MCF 10A (cell line): ENCODE measurements at regions of chr1 and their contacts with region 1.

Region 1: GRCh38 chr1:31789259-31790065 is 25.3 kb upstream of the ADGRB2 start:
- DNase-seq: peak; percentile 86
- H3K4me3 Mint-ChIP-seq: peak overlapping the region; percentile 76
- H3K27ac Mint-ChIP-seq: peak overlapping the region; percentile 95
- H3K4me1 Mint-ChIP-seq: peaks cover 8% of the 10 kb centered on the region
- H3K27me3 Mint-ChIP-seq: no peaks in the 10 kb centered on the region
- CTCF ChIP-seq: peak; percentile 92

Region 2: DNA sequence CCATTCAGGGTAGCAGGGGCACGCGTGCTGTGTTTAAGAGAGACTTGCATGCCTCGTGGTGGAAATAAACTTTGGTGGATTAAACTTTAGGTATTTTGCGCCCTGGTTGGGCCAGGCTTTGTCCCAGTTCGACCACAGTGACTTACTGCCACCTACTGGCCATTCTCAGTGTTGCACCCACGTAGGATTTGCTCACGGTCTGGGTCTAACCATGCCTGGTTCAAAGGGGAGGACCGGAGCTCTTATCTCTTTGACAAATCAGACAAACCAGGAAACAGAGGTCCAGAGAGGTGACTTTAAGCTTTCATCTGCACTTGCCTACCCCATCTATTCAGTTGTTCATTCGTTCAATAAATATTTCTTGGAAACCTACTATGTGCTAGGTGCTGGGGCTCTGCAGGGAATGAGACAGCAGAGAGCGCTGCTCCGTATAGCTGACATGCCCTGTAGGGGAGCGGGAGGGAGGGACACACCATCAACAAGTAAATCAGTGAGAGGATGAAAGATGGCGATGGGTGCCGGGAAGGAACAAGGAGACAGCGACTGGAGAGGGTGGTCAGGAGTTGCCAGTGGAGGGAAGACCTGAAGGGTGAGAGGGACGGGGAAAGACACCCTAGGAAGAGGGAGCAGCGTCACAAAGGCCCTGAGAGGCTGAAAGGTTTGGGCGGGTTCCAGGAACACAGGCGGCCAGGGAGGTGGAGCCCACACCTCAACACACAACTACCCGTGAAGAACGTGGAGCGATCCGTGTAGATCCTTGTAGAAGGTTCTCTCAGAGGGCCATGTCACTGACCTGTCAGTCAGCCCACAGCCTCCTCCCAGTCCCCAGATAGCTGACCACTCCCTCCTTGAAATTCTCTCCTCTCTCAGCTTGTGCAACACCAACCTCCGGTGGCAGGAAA is 240.3 kb before region 1 on chr1:
- CTCF ChIA-PET with region 1: interaction called, 9 read pairs
- POLR2A ChIA-PET with region 1: interaction called, 10 read pairs
- intact Hi-C with region 1: loop called (anchors 1 kb)
- DNase-seq: peak; percentile 91
- H3K4me3 Mint-ChIP-seq: peak overlapping the region; percentile 73
- H3K27ac Mint-ChIP-seq: peak overlapping the region; percentile 33
- H3K4me1 Mint-ChIP-seq: peaks cover 11% of the 10 kb centered on the region
- H3K27me3 Mint-ChIP-seq: no peaks in the 10 kb centered on the region
- CTCF ChIP-seq: peak; percentile 71

Region 3: GRCh38 chr1:31593770-31594632 is 195.5 kb before region 1 on chr1:
- CTCF ChIA-PET with region 1: interaction called, 4 read pairs
- POLR2A ChIA-PET with region 1: no interaction called
- intact Hi-C with region 1: loop called (anchors 1 kb)
- DNase-seq: peak; percentile 81
- H3K4me3 Mint-ChIP-seq: no peak overlapping the region
- H3K27ac Mint-ChIP-seq: no peak overlapping the region
- H3K4me1 Mint-ChIP-seq: peaks cover 11% of the 10 kb centered on the region
- H3K27me3 Mint-ChIP-seq: peaks cover 10% of the 10 kb centered on the region
- CTCF ChIP-seq: peak; percentile 83

Region 4: DNA sequence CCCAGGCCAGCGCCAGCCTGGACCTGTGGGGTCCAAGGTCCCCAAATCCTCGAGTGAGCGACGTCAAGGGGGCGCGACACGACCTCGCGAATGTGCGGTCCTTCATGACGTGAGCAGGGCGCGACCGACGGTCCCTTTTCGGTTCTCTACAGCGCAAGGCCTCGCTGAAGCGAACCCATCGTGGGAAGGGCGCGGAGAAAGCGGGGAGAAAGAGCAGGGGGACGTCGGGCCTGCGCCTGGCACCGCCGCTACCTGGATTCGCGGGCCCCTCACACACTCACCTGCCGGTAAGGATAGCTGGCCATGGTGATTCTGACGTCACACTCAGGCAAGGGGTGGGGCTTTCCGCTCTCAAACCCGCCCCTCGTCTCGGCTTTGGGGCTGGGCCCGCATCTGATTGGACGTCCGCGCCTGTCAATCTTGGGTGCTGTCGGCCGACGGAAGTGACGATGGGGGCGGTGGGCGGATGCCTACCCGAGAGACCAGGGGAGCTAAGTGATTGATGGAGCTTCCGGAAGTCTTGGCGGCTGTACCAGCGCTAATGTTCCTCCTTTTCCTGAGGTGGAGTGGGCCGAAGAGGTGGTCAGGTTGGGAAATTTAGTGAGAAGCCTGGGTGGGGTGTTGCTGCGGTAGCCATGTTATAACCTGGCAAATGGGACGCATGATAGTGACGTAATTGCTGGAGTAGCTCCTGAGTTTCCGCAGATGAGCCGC is 144.7 kb before region 1 on chr1 and contains the start of gene PEF1:
- CTCF ChIA-PET with region 1: interaction called, 3 read pairs
- POLR2A ChIA-PET with region 1: interaction called, 11 read pairs
- intact Hi-C with region 1: no loop called
- DNase-seq: peak; percentile 98
- H3K4me3 Mint-ChIP-seq: peak within 1 kb of the TSS; percentile 89
- H3K27ac Mint-ChIP-seq: peak within 1 kb of the TSS; percentile 100
- H3K4me1 Mint-ChIP-seq: no peaks in the 10 kb centered on the region
- H3K27me3 Mint-ChIP-seq: no peaks in the 10 kb centered on the region
- CTCF ChIP-seq: no peak
- total RNA-seq, gene PEF1: 56.7 and 61.1 TPM in 2 replicates

Region 5: GRCh38 chr1:31669786-31670592 is 119.5 kb before region 1 on chr1:
- CTCF ChIA-PET with region 1: interaction called, 56 read pairs
- POLR2A ChIA-PET with region 1: interaction called, 44 read pairs
- intact Hi-C with region 1: loop called (anchors 1 kb)
- DNase-seq: peak; percentile 97
- H3K4me3 Mint-ChIP-seq: peak overlapping the region; percentile 73
- H3K27ac Mint-ChIP-seq: peak overlapping the region; percentile 62
- H3K4me1 Mint-ChIP-seq: peaks cover 45% of the 10 kb centered on the region
- H3K27me3 Mint-ChIP-seq: no peaks in the 10 kb centered on the region
- CTCF ChIP-seq: no peak

Region 6: GRCh38 chr1:31762726-31763670 is 26.5 kb before region 1 on chr1:
- CTCF ChIA-PET with region 1: interaction called, 4 read pairs
- POLR2A ChIA-PET with region 1: interaction called, 4 read pairs
- intact Hi-C with region 1: loop called (anchors 2 kb)
- DNase-seq: peak; percentile 59
- H3K4me3 Mint-ChIP-seq: peak overlapping the region; percentile 75
- H3K27ac Mint-ChIP-seq: no peak overlapping the region
- H3K4me1 Mint-ChIP-seq: peaks cover 11% of the 10 kb centered on the region
- H3K27me3 Mint-ChIP-seq: no peaks in the 10 kb centered on the region
- CTCF ChIP-seq: peak; percentile 64

Region 7: GRCh38 chr1:31891280-31891679 is 101.8 kb after region 1 on chr1:
- CTCF ChIA-PET with region 1: no interaction called
- POLR2A ChIA-PET with region 1: no interaction called
- intact Hi-C with region 1: no loop called
- DNase-seq: no peak
- H3K4me3 Mint-ChIP-seq: no peak overlapping the region
- H3K27ac Mint-ChIP-seq: no peak overlapping the region
- H3K4me1 Mint-ChIP-seq: peaks cover 8% of the 10 kb centered on the region
- H3K27me3 Mint-ChIP-seq: no peaks in the 10 kb centered on the region
- CTCF ChIP-seq: no peak